Activated CD4-positive, alpha-beta T cell treated with anti-CD3 and anti-CD28 coated beads, Interleukin-2, amount 10 ng/mL, durations not matched to agents 24 days and 14 days (primary cell): ENCODE measurements at regions of chr14 and their contacts with region 1.

Region 1: DNA sequence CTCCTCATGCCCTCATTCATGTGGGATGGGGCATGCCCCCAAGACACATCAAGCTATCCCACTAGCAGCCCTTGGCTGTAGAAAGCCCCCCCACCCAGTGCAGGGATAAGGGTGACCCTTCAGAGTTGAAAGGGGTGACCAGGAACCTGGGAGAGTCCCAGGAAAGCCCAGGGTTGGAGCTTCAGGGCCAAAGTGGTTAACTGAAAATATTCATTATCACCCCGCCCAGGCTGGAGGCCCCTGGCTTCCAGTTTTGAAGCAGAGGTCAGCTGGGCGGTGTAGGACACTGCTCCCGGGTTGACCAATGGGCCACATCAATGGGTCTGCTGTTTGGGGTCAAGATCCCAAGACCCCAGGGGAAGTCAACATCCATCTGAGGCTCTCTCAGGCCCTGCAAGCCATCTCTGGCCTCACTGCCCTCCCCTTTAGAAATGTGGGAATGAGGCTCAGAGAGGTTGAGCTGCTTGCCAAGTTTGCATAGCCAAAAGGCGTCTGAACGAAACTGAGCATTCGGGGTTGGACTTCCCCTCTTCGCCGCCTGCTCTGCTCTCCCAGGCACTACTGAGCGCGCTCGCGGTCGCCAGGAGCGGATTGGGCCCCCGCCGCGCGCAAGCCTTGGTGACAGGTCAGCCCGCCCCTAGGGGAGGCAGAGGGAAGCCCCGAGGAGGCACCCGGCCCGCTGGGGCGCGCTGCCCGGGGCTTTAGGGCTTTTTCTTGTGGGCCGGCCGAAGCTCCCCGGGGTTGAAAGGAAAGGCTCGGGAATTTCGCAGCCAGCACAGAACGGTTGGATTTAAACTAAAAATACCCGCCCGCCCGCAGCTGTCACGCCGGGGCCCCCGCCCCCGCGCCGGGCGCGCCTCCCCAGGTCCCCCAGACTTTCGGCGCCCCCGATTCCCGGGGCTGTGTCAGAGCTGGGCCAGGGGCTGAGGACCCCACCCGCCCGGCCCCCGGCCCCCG is 576 bp downstream of the SYNE3 start:
- DNase-seq: peak; percentile 96
- H3K4me3 Mint-ChIP-seq: peak overlapping the region; percentile 95
- H3K27ac Mint-ChIP-seq: peak overlapping the region; percentile 90
- H3K4me1 Mint-ChIP-seq: peaks cover 60% of the 10 kb centered on the region
- H3K27me3 Mint-ChIP-seq: no peaks in the 10 kb centered on the region

Region 2: DNA sequence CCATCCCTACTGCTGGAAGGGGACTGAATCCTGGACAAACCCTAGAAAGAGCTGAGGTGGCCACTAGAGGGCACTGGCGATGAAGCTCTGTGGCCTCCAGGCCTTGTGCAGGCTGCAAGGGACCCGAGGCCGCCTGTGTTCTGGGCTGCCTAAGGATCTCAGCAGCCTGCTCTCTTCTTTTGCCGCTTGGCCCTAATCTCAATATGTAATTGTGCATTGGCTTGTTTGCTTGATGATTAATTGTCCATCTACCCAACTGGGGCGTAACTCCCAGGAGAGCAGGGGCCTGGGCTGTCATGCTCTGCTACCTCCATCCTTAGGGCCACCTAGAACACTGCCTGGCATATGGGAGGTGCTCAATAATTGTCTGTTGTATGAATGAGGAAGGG is 73.2 kb before region 1 on chr14:
- intact Hi-C with region 1: loop called (anchors 1 kb)
- DNase-seq: peak; percentile 91
- H3K4me3 Mint-ChIP-seq: no peak overlapping the region
- H3K27ac Mint-ChIP-seq: peak overlapping the region; percentile 5
- H3K4me1 Mint-ChIP-seq: peaks cover 3% of the 10 kb centered on the region
- H3K27me3 Mint-ChIP-seq: no peaks in the 10 kb centered on the region

Region 3: GRCh38 chr14:95697764-95698163 is 181.9 kb after region 1 on chr14:
- intact Hi-C with region 1: no loop called
- DNase-seq: no peak
- H3K4me3 Mint-ChIP-seq: no peak overlapping the region
- H3K27ac Mint-ChIP-seq: no peak overlapping the region
- H3K4me1 Mint-ChIP-seq: peaks cover 5% of the 10 kb centered on the region
- H3K27me3 Mint-ChIP-seq: peaks cover 34% of the 10 kb centered on the region